Caco-2 (cell line): ENCODE measurements at regions of chr17 and their contacts with region 1.

Region 1: GRCh38 chr17:27455914-27456680 is at the start of gene KSR1:
- DNase-seq: peak; percentile 95 to 98
- H3K4me3 ChIP-seq: peak within 1 kb of the TSS; percentile 79
- H3K4me3 Mint-ChIP-seq: peak within 1 kb of the TSS; percentile 89
- H3K27ac Mint-ChIP-seq: peak within 1 kb of the TSS; percentile 76
- H3K4me1 ChIP-seq: peaks cover 30% of the 10 kb centered on the region
- H3K4me1 Mint-ChIP-seq: peaks cover 38% of the 10 kb centered on the region
- H3K27me3 ChIP-seq: no peaks in the 10 kb centered on the region
- H3K27me3 Mint-ChIP-seq: no peaks in the 10 kb centered on the region
- CTCF ChIP-seq: peak; percentile 90 to 99
- total RNA-seq, gene KSR1: 88.9 and 91.5 TPM in 2 replicates

Region 2: GRCh38 chr17:27381007-27381501 is 75.0 kb before region 1 on chr17:
- CTCF ChIA-PET with region 1: no interaction called
- POLR2A ChIA-PET with region 1: no interaction called
- intact Hi-C with region 1: no loop called
- DNase-seq: peak; percentile 77 to 82
- H3K4me3 ChIP-seq: no peak overlapping the region
- H3K4me3 Mint-ChIP-seq: no peak overlapping the region
- H3K27ac Mint-ChIP-seq: no peak overlapping the region
- H3K4me1 ChIP-seq: 0 out of 2 replicates have a peak, but pooled peaks cover 3% of the 10 kb centered on the region
- H3K4me1 Mint-ChIP-seq: no peaks in the 10 kb centered on the region
- H3K27me3 ChIP-seq: no peaks in the 10 kb centered on the region
- H3K27me3 Mint-ChIP-seq: peaks cover 4% of the 10 kb centered on the region
- CTCF ChIP-seq: peak; percentile 93 to 94

Region 3: DNA sequence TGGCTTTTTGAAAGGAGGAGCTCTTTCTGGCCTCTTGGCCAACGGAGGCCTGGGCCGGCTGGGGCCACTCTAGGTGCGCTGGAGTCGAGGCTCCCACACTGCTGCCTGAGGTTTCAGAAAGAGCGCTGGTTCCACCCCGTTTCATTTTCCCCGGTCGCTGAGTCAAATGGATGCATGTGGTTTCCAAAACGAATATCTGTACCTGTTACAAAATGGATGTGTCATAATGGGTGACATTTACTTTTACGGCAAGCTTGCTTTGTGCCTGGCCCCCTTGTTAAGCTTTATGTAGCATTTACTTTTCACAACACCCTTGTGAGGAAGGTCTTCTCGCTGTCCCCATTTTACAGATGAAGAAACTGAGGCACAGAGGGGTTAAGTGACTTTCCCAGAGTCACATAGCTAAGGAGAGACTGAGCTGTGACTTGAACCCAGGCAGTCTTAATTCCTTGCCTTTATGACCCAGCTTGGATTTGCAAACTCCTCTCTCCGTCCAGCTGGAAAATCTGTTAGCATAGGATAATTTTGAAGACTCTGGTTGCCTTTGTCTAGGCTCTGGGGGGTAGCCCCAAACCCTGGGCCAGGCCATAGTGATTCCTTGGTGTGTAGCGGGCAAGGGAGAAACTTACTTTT is 10.8 kb after region 1 on chr17:
- CTCF ChIA-PET with region 1: interaction called, 16 read pairs
- POLR2A ChIA-PET with region 1: interaction called, 6 read pairs
- intact Hi-C with region 1: no loop called
- DNase-seq: no peak
- H3K4me3 ChIP-seq: no peak overlapping the region
- H3K4me3 Mint-ChIP-seq: no peak overlapping the region
- H3K27ac Mint-ChIP-seq: no peak overlapping the region
- H3K4me1 ChIP-seq: peaks cover 4% of the 10 kb centered on the region; the same call in 1 of the 2 replicates
- H3K4me1 Mint-ChIP-seq: peaks cover 10% of the 10 kb centered on the region
- H3K27me3 ChIP-seq: no peaks in the 10 kb centered on the region
- H3K27me3 Mint-ChIP-seq: no peaks in the 10 kb centered on the region
- CTCF ChIP-seq: no peak

Region 4: GRCh38 chr17:27473748-27474609 is 17.9 kb after region 1 on chr17:
- CTCF ChIA-PET with region 1: interaction called, 16 read pairs
- POLR2A ChIA-PET with region 1: no interaction called
- intact Hi-C with region 1: no loop called
- DNase-seq: no peak
- H3K4me3 ChIP-seq: no peak overlapping the region
- H3K4me3 Mint-ChIP-seq: no peak overlapping the region
- H3K27ac Mint-ChIP-seq: no peak overlapping the region
- H3K4me1 ChIP-seq: no peaks in the 10 kb centered on the region
- H3K4me1 Mint-ChIP-seq: peaks cover 7% of the 10 kb centered on the region
- H3K27me3 ChIP-seq: no peaks in the 10 kb centered on the region
- H3K27me3 Mint-ChIP-seq: no peaks in the 10 kb centered on the region
- CTCF ChIP-seq: no peak

Region 5: GRCh38 chr17:27532269-27533263 is 76.5 kb after region 1 on chr17:
- CTCF ChIA-PET with region 1: interaction called, 9 read pairs
- POLR2A ChIA-PET with region 1: interaction called, 7 read pairs
- intact Hi-C with region 1: loop called (anchors 2 kb)
- DNase-seq: peak; percentile 78 to 85
- H3K4me3 ChIP-seq: no peak overlapping the region
- H3K4me3 Mint-ChIP-seq: peak overlapping the region; percentile 15
- H3K27ac Mint-ChIP-seq: peak overlapping the region; percentile 90
- H3K4me1 ChIP-seq: peaks cover 65% of the 10 kb centered on the region
- H3K4me1 Mint-ChIP-seq: peaks cover 75% of the 10 kb centered on the region
- H3K27me3 ChIP-seq: no peaks in the 10 kb centered on the region
- H3K27me3 Mint-ChIP-seq: no peaks in the 10 kb centered on the region
- CTCF ChIP-seq: no peak

Region 6: DNA sequence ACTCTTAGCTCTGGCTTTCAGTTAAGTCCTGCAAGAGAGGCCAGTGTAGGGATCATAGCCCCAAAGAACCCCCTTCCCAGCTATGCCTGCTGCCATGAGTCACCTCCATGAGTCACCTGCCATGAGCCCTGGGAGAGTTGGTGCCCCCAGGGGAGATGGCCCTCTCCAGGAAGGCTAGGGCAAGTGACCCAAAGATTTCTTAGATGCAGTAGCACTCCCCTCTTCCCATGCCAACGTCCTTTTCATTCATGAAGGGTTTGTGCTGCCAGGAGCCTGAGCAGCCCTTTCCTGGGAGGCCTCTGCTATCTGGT is 96.3 kb after region 1 on chr17:
- CTCF ChIA-PET with region 1: interaction called, 4 read pairs
- POLR2A ChIA-PET with region 1: no interaction called
- intact Hi-C with region 1: loop called (anchors 5 kb)
- DNase-seq: peak; percentile 69 to 83
- H3K4me3 ChIP-seq: no peak overlapping the region
- H3K4me3 Mint-ChIP-seq: peak overlapping the region; percentile 18
- H3K27ac Mint-ChIP-seq: peak overlapping the region; percentile 86
- H3K4me1 ChIP-seq: peaks cover 47% of the 10 kb centered on the region
- H3K4me1 Mint-ChIP-seq: peaks cover 39% of the 10 kb centered on the region
- H3K27me3 ChIP-seq: no peaks in the 10 kb centered on the region
- H3K27me3 Mint-ChIP-seq: no peaks in the 10 kb centered on the region
- CTCF ChIP-seq: no peak

Region 7: DNA sequence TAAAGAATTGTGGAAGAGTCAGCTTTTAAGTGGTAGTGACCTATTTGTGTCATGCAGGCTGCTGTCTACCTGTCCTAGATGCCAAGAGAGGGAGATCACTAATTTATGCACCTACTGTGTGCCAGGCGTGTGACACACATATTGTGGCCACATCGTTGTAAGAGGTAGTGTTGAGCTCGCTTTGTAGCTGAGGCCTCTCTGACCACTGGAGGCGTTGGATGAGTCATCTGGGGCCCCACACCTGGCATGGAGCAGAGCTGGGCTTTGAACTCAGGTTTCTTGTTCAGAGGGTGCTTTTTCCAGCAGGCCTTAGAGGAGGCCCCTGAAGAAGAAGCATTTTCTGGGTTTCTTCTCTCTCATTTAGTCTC is 122.6 kb after region 1 on chr17:
- CTCF ChIA-PET with region 1: interaction called, 21 read pairs
- POLR2A ChIA-PET with region 1: interaction called, 3 read pairs
- intact Hi-C with region 1: no loop called
- DNase-seq: peak; percentile 57 to 77
- H3K4me3 ChIP-seq: no peak overlapping the region
- H3K4me3 Mint-ChIP-seq: no peak overlapping the region
- H3K27ac Mint-ChIP-seq: peak overlapping the region; percentile 89
- H3K4me1 ChIP-seq: peaks cover 68% of the 10 kb centered on the region
- H3K4me1 Mint-ChIP-seq: peaks cover 59% of the 10 kb centered on the region
- H3K27me3 ChIP-seq: no peaks in the 10 kb centered on the region
- H3K27me3 Mint-ChIP-seq: no peaks in the 10 kb centered on the region
- CTCF ChIP-seq: no peak

Region 8: GRCh38 chr17:27609611-27610303 is 153.7 kb after region 1 on chr17:
- CTCF ChIA-PET with region 1: interaction called, 10 read pairs
- POLR2A ChIA-PET with region 1: no interaction called
- intact Hi-C with region 1: no loop called
- DNase-seq: peak; percentile 75 to 79
- H3K4me3 ChIP-seq: no peak overlapping the region
- H3K4me3 Mint-ChIP-seq: no peak overlapping the region
- H3K27ac Mint-ChIP-seq: no peak overlapping the region
- H3K4me1 ChIP-seq: no peaks in the 10 kb centered on the region
- H3K4me1 Mint-ChIP-seq: no peaks in the 10 kb centered on the region
- H3K27me3 ChIP-seq: no peaks in the 10 kb centered on the region
- H3K27me3 Mint-ChIP-seq: no peaks in the 10 kb centered on the region
- CTCF ChIP-seq: peak; percentile 84 to 99